ENCODE measurements at regions of chr11 and their contacts with region 1.

Region 1: GRCh38 chr11:62340269-62340901 is 3.1 kb downstream of the ASRGL1 start:
- DNase-seq: peak in 1 of 2 experiments; percentile 18
- H3K4me3 ChIP-seq: no peak overlapping the region
- H3K27ac ChIP-seq: no peak overlapping the region
- H3K4me1 ChIP-seq: no peaks in the 10 kb centered on the region
- H3K27me3 ChIP-seq: peaks cover 31% of the 10 kb centered on the region
- CTCF ChIP-seq: peak; percentile 77

Region 2: GRCh38 chr11:62233730-62234129 is 106.7 kb before region 1 on chr11:
- CTCF ChIA-PET with region 1: interaction called, 11 read pairs
- POLR2A ChIA-PET with region 1: no interaction called
- intact Hi-C with region 1: no loop called
- DNase-seq: no peak
- H3K4me3 ChIP-seq: no peak overlapping the region
- H3K27ac ChIP-seq: no peak overlapping the region
- H3K4me1 ChIP-seq: no peaks in the 10 kb centered on the region
- H3K27me3 ChIP-seq: peaks cover 74% of the 10 kb centered on the region
- CTCF ChIP-seq: peak; percentile 29; the same call in 1 of the 2 replicates

Region 3: GRCh38 chr11:62306227-62306626 is 34.2 kb before region 1 on chr11:
- CTCF ChIA-PET with region 1: no interaction called
- POLR2A ChIA-PET with region 1: no interaction called
- intact Hi-C with region 1: no loop called
- DNase-seq: no peak
- H3K4me3 ChIP-seq: no peak overlapping the region
- H3K27ac ChIP-seq: no peak overlapping the region
- H3K4me1 ChIP-seq: no peaks in the 10 kb centered on the region
- H3K27me3 ChIP-seq: peaks cover 72% of the 10 kb centered on the region
- CTCF ChIP-seq: no peak

Region 4: DNA sequence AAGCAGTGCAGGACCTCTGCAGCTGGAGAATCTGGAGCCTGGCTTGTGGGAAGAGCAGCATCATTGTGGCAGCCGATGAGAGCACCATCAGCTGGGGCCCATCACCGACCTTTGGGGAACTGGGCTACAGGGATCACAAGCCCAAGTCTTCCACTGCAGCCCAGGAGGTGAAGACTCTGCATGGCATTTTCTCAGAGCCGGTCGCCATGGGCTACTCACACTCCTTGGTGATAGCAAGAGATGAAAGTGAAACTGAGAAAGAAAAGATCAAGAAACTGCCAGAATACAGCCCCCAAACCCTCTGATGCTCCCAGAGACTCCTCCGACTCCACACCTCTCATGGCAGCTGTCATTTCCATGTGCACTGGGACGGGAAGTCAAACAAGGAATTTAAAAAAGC is 32.5 kb after region 1 on chr11:
- CTCF ChIA-PET with region 1: interaction called, 8 read pairs
- POLR2A ChIA-PET with region 1: no interaction called
- intact Hi-C with region 1: loop called (anchors 1 kb)
- DNase-seq: no peak
- H3K4me3 ChIP-seq: no peak overlapping the region
- H3K27ac ChIP-seq: no peak overlapping the region
- H3K4me1 ChIP-seq: no peaks in the 10 kb centered on the region
- H3K27me3 ChIP-seq: no peaks in the 10 kb centered on the region
- CTCF ChIP-seq: no peak

Measured in PC-9 (cell line).